Ascending aorta (tissue), 2 donors: ENCODE measurements at regions of chr17 and their contacts with region 1.

Region 1: DNA sequence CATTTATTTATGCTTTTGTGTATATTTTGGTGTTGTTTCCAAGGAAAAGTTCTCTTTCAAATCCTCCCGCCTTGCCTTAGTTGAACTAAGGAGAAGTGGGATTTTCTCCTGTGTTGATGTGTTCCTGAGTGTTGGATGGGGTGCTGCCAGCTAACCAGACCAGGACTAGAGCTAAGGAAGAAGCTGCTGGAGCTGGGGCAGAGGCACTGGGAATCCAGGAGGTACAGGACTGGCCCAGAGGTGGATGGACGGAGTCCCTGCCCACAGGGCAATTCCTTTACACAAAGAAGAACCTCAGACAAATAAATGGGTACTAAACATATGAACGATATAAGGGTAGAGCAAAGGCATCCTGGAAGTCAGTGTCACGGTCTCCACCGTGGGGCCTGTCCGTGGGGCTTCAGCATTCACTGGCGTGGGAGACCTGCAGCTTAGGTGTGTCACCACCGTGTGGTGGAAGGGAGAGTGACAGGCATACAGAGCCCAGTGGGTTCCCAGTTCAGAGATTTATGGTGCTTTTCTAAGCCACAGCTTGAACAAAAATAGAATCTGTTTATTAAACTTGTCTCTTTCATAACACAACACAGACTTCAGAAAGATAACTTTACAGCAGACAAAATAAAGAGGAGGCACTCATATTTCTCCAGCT is 270.7 kb downstream of the NTN1 start:
- DNase-seq: peak in 1 of 2 donors; percentile 72
- H3K4me3 ChIP-seq: no peak overlapping the region
- H3K27ac ChIP-seq: peak overlapping the region; percentile 80 to 83
- H3K4me1 ChIP-seq: peaks cover 3 to 15% of the 10 kb centered on the region in 2 donors
- H3K27me3 ChIP-seq: no peaks in the 10 kb centered on the region
- CTCF ChIP-seq: peak; percentile 74 to 77 (median 75)

Region 2: GRCh38 chr17:9002606-9003354 is 289.3 kb before region 1 on chr17:
- intact Hi-C with region 1: loop called (anchors 1 kb)
- DNase-seq: peak in 1 of 2 donors; percentile 65
- H3K4me3 ChIP-seq: peak overlapping the region; percentile 64 to 77
- H3K27ac ChIP-seq: peak overlapping the region in 1 of 2 donors; percentile 19
- H3K4me1 ChIP-seq: peaks cover 0 to 4% of the 10 kb centered on the region in 2 donors
- H3K27me3 ChIP-seq: no peaks in the 10 kb centered on the region
- CTCF ChIP-seq: peak; percentile 30 to 37 (median 30)

Region 3: GRCh38 chr17:9115446-9116191 is 176.4 kb before region 1 on chr17:
- intact Hi-C with region 1: loop called (anchors 5 kb)
- DNase-seq: peak; percentile 35 to 89
- H3K4me3 ChIP-seq: peak overlapping the region; percentile 46 to 59
- H3K27ac ChIP-seq: peak overlapping the region; percentile 88 to 93
- H3K4me1 ChIP-seq: peaks cover 0 to 11% of the 10 kb centered on the region in 2 donors
- H3K27me3 ChIP-seq: no peaks in the 10 kb centered on the region
- CTCF ChIP-seq: peak in 2 of 3 experiments; percentile 45 to 65

Region 4: GRCh38 chr17:9239793-9240658 is 52.0 kb before region 1 on chr17:
- intact Hi-C with region 1: loop called (anchors 5 kb)
- DNase-seq: peak; percentile 59 to 91
- H3K4me3 ChIP-seq: peak overlapping the region; percentile 65 to 69
- H3K27ac ChIP-seq: peak overlapping the region; percentile 99 to 100
- H3K4me1 ChIP-seq: peaks cover 21 to 60% of the 10 kb centered on the region in 2 donors
- H3K27me3 ChIP-seq: no peaks in the 10 kb centered on the region
- CTCF ChIP-seq: no peak